Activated B cell treated with CpG ODN at 0.5 μM for 24 hours (primary cell): ENCODE measurements at regions of chr5 and their contacts with region 1.

Region 1: GRCh38 chr5:169805527-169805934 is 168.5 kb downstream of the DOCK2 start:
- DNase-seq: peak; percentile 35
- ATAC-seq: peak; percentile 94
- H3K4me3 Mint-ChIP-seq: peak overlapping the region; percentile 6
- H3K27ac Mint-ChIP-seq: peak overlapping the region; percentile 74
- H3K4me1 Mint-ChIP-seq: peaks cover 27% of the 10 kb centered on the region
- H3K27me3 Mint-ChIP-seq: no peaks in the 10 kb centered on the region
- CTCF ChIP-seq: no peak

Region 2: GRCh38 chr5:169204788-169205400 is 600.6 kb before region 1 on chr5:
- CTCF ChIA-PET with region 1: no interaction called
- POLR2A ChIA-PET with region 1: no interaction called
- intact Hi-C with region 1: no loop called
- DNase-seq: no peak
- ATAC-seq: no peak
- H3K4me3 Mint-ChIP-seq: no peak overlapping the region
- H3K27ac Mint-ChIP-seq: no peak overlapping the region
- H3K4me1 Mint-ChIP-seq: no peaks in the 10 kb centered on the region
- H3K27me3 Mint-ChIP-seq: no peaks in the 10 kb centered on the region
- CTCF ChIP-seq: no peak

Region 3: GRCh38 chr5:169701910-169702451 is 103.5 kb before region 1 on chr5:
- CTCF ChIA-PET with region 1: no interaction called
- POLR2A ChIA-PET with region 1: no interaction called
- intact Hi-C with region 1: loop called (anchors 5 kb)
- DNase-seq: no peak
- ATAC-seq: no peak
- H3K4me3 Mint-ChIP-seq: no peak overlapping the region
- H3K27ac Mint-ChIP-seq: peak overlapping the region; percentile 81
- H3K4me1 Mint-ChIP-seq: peaks cover 51% of the 10 kb centered on the region
- H3K27me3 Mint-ChIP-seq: no peaks in the 10 kb centered on the region
- CTCF ChIP-seq: no peak

Region 4: GRCh38 chr5:169719360-169720314 is 85.9 kb before region 1 on chr5:
- CTCF ChIA-PET with region 1: no interaction called
- POLR2A ChIA-PET with region 1: no interaction called
- intact Hi-C with region 1: no loop called
- DNase-seq: no peak
- ATAC-seq: no peak
- H3K4me3 Mint-ChIP-seq: no peak overlapping the region
- H3K27ac Mint-ChIP-seq: no peak overlapping the region
- H3K4me1 Mint-ChIP-seq: no peaks in the 10 kb centered on the region
- H3K27me3 Mint-ChIP-seq: no peaks in the 10 kb centered on the region
- CTCF ChIP-seq: no peak

Region 5: DNA sequence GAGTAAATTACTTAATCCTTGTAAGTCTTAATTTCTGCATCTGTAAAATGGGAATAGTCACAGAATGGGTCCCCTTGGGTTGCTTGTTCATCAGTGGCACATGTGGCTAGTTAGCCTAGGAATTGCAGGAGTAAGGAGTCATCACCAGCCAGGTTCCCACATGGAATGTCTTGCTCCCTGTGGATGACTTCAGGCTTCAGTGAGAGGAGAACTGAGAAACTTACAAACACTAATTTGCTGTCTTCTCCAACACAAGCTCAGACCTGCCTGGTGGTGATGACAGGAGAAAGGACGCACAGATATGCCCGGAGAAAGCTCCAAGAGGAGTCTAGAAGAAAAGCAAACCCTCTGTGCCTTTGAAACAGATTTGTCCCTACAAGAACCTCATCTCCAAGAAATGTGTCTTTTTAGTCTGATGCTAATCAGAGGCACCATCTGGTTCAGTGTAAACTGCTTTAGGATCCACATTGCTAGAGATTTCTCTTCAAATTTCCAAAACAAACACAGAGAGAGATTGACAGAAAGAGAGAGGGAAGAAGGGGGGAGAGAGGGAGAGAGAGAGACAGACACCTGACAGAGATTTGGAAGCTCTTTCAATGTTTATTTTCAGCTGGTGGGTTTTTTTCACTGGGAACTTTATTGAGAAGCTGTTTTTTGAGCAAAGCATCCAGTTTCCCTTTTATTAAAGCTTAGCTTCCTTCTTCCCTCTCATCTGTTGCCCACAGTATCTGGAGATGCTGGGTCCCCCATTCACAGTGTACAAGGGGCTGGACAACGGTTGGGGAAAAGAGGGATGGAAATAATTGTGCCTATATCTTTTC is 40.1 kb before region 1 on chr5:
- CTCF ChIA-PET with region 1: no interaction called
- POLR2A ChIA-PET with region 1: no interaction called
- intact Hi-C with region 1: loop called (anchors 5 kb)
- DNase-seq: no peak
- ATAC-seq: no peak
- H3K4me3 Mint-ChIP-seq: no peak overlapping the region
- H3K27ac Mint-ChIP-seq: no peak overlapping the region
- H3K4me1 Mint-ChIP-seq: peaks cover 27% of the 10 kb centered on the region
- H3K27me3 Mint-ChIP-seq: no peaks in the 10 kb centered on the region
- CTCF ChIP-seq: no peak

Region 6: DNA sequence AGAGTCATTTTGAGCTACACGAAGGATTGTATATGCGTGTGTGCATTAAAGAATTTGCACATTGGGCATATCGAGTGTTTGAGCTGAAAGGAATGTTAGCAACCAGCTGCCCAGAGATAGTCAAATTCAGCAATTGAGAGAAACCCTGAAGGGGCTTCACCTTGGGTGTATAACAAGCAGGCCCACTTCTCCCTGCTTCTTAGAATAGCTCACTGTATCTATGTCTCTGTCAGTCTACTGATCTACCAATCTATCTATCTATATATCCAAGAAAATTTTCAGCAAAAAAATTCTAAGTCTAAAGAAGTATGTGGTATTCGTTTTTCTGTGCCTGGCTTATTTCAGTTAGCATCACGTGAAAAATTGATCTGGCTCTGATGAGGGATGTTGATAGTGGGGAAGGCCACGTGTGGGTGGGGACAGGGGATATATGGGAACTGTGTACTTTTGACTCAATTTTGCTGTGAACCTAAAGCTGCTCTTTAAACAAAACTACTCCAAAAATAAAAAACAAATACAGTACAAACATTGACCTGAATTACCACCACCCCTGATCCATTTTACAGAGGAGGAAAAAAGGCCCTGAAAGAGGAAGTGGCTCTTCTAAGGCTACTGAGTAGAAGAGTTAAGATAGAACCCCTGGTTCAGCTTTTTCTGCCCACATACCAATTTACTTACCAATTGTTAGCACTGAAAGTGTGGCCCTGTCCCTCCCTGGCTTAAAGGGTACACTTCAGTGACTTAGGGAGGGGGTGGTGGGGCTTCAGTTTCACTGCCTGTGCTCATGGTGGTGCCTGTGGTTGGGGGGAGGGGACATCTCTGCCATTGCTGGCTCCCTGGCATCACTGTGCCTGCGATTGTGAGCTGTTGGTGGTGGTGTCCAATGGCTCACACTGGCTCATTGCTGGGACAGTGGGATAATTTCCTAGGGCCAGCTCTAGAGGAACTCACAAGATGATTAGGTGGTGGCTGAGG is 26.6 kb before region 1 on chr5:
- CTCF ChIA-PET with region 1: no interaction called
- POLR2A ChIA-PET with region 1: interaction called, 4 read pairs
- intact Hi-C with region 1: loop called (anchors 1 kb)
- DNase-seq: no peak
- ATAC-seq: peak; percentile 82
- H3K4me3 Mint-ChIP-seq: peak overlapping the region; percentile 28
- H3K27ac Mint-ChIP-seq: peak overlapping the region; percentile 74
- H3K4me1 Mint-ChIP-seq: peaks cover 31% of the 10 kb centered on the region
- H3K27me3 Mint-ChIP-seq: no peaks in the 10 kb centered on the region
- CTCF ChIP-seq: no peak